ENCODE measurements at regions of chr4 and their contacts with region 1.

Region 1: GRCh38 chr4:139177868-139178611 is 1.0 kb upstream of the ELF2 start:
- DNase-seq: peak; percentile 97
- H3K4me3 Mint-ChIP-seq: peak overlapping the region; percentile 86
- H3K27ac Mint-ChIP-seq: peak overlapping the region; percentile 91
- H3K4me1 Mint-ChIP-seq: peaks cover 36% of the 10 kb centered on the region
- H3K27me3 Mint-ChIP-seq: peaks cover 50% of the 10 kb centered on the region

Region 2: DNA sequence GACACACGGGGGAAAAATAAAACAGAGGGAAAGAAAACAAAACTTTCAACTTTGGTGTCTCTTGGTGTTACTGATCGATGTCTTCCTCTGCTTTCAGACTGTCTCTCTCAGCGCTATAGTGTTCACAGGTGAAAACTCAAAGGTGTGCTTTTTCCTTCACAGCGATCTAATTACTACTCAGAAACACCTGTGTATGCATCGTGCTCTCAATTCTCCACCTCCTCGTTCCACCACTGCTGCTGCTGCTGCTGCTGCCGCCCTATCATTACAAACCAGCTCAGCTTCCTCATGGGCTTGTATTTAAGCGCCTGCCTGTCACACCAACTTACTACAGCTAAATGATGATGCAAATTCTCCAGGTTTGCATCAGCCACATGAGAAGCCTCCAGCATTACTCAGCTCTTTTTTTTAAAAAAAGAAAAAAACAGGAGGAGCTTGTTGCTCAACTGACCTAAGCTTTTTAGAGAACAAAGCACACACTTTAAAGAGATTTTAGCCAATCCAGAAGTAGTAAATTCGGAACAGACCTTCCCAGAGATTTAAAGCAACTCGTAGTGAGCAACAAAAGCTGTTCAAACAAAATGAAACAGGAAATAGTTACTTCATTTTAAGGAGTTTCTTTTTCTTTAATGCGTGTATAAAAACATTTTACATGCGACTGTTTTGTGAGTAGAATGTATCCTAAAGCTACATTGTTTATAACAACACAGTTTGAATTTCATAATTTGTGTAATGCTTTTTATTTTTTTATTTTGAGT is 935.8 kb before region 1 on chr4 and contains the start of gene SLC7A11:
- intact Hi-C with region 1: loop called (anchors 5 kb)
- DNase-seq: peak; percentile 70
- H3K4me3 Mint-ChIP-seq: peak within 1 kb of the TSS; percentile 88
- H3K27ac Mint-ChIP-seq: peak within 1 kb of the TSS; percentile 83
- H3K4me1 Mint-ChIP-seq: peaks cover 32% of the 10 kb centered on the region
- H3K27me3 Mint-ChIP-seq: peaks cover 4% of the 10 kb centered on the region
- total RNA-seq, gene SLC7A11: 2.6 and 2.7 TPM in 2 replicates

Region 3: DNA sequence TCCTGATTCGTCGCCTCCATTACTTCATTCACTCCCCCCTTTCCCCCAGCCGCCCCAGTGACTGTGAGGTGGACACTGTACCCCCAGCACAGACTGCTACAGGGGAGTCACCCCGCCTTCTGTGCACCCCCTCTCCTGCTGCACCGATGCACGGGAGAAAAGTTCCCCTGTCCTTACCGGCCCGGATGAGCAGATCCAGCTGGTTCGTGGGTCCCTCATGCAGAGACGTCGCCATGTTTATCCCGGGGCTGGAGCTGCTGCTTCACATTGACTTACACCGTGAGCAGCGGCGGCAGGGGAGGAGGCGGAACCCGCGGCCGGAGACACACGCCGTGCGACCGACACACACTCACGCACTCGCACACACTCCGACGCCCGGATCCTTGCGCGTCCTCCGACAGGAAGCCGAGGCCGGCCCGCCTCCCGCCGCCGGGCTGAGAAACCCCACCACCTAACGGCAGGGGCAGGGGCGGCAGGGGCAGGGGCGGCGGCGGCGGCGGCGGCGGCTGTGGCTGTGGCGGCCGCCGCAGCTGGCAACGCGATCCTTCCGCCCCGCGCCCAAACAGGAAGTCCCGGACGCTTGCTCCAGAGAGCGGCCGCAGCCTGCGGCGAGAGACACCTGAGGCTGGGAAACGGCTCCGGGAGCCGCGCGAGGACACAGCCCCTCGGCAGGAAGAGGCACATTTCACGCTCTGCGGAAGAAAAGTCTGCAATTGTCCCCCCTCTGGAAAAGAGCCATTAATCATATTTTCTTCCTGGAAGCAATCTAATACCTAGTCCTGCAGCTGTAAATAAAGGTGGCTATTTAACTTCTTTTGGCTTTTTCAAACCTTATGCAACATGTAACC is 93.9 kb before region 1 on chr4:
- intact Hi-C with region 1: loop called (anchors 1 kb)
- DNase-seq: peak; percentile 78
- H3K4me3 Mint-ChIP-seq: peak overlapping the region; percentile 86
- H3K27ac Mint-ChIP-seq: peak overlapping the region; percentile 98
- H3K4me1 Mint-ChIP-seq: peaks cover 28% of the 10 kb centered on the region
- H3K27me3 Mint-ChIP-seq: no peaks in the 10 kb centered on the region

Region 4: GRCh38 chr4:139115226-139115625 is 62.8 kb before region 1 on chr4:
- intact Hi-C with region 1: no loop called
- DNase-seq: no peak
- H3K4me3 Mint-ChIP-seq: no peak overlapping the region
- H3K27ac Mint-ChIP-seq: no peak overlapping the region
- H3K4me1 Mint-ChIP-seq: no peaks in the 10 kb centered on the region
- H3K27me3 Mint-ChIP-seq: no peaks in the 10 kb centered on the region

Region 5: GRCh38 chr4:139266583-139267257 is 88.7 kb after region 1 on chr4:
- intact Hi-C with region 1: loop called (anchors 1 kb)
- DNase-seq: peak; percentile 70
- H3K4me3 Mint-ChIP-seq: peak overlapping the region; percentile 50
- H3K27ac Mint-ChIP-seq: peak overlapping the region; percentile 10
- H3K4me1 Mint-ChIP-seq: peaks cover 21% of the 10 kb centered on the region
- H3K27me3 Mint-ChIP-seq: peaks cover 23% of the 10 kb centered on the region

Region 6: DNA sequence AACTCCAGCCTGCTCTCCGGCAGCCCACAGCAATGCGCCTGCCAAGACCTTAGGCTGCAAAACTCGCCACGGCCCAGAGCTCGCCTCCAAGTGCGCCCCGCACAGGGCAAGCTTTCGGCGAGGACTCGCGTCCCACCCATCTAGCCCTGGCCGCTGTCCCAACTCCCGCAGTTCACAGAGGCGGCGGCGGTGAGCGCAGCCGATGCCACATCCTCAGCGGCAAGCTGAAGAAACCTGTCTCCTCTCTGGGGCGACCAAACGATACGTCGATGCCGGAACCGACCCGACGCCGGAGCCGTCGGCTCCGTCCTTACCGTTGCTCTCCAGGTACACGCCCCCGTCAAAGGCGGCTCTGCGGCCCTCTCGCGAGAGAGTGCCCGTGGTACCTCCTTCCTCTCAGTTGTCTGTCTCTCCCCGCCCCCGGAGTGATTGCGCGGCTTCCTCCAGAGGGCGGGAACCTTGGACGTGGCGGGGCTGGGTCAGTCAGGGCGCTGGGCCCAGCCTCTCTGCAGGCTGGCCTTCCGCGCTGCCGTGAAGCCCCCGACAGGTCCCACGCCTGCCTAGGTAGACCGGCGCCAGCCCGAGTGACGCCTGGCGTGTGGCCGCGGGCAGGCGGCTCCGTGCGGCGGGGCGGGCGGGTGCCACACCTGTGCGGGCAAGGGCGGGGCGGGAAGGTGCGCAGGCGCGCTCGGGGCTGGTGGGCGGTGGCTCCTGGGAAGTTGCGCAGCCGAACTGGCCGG is 275.5 kb after region 1 on chr4:
- intact Hi-C with region 1: loop called (anchors 1 kb)
- DNase-seq: peak; percentile 95
- H3K4me3 Mint-ChIP-seq: peak overlapping the region; percentile 94
- H3K27ac Mint-ChIP-seq: peak overlapping the region; percentile 99
- H3K4me1 Mint-ChIP-seq: peaks cover 58% of the 10 kb centered on the region
- H3K27me3 Mint-ChIP-seq: no peaks in the 10 kb centered on the region

Region 7: GRCh38 chr4:139934057-139934707 is 756.1 kb after region 1 on chr4:
- intact Hi-C with region 1: no loop called
- DNase-seq: no peak
- H3K4me3 Mint-ChIP-seq: no peak overlapping the region
- H3K27ac Mint-ChIP-seq: no peak overlapping the region
- H3K4me1 Mint-ChIP-seq: no peaks in the 10 kb centered on the region
- H3K27me3 Mint-ChIP-seq: peaks cover 11% of the 10 kb centered on the region

Region 8: DNA sequence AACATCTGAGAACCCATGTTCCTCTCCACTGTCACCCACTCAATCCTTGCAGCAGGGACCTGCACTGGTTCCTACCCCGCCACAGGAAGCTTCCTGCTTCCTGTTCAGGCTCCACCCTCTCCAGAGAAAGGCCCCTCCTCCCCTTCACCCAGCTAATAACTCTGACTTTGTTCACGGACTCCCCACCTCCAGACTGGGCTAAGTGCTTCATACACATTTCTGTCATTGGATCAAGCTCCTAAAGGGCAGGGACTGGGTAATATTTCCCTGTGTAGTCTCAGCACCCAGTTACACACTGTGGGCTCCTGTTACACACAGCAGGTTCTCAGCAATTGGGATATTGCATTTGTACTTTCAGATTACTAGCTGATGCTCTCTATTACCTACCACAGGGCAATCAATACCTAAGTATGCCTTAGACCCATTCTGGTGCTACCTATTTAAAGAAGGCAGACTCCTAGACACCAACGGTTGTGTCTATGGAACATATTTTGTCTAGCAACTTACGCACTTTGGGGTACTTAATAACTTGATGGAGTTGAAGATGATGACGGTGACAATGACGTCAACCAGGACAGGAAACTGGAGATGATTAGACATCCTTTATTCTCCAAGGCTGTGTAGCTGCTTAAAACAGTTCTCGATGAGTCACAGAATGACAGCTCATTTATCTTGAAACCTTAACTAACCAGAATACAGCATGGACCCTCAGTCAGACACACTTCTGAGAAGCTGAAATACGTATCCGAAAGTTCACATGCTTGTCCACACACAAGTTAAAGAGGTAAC is 917.8 kb after region 1 on chr4:
- intact Hi-C with region 1: loop called (anchors 5 kb)
- DNase-seq: peak; percentile 63
- H3K4me3 Mint-ChIP-seq: peak overlapping the region; percentile 80
- H3K27ac Mint-ChIP-seq: peak overlapping the region; percentile 94
- H3K4me1 Mint-ChIP-seq: peaks cover 89% of the 10 kb centered on the region
- H3K27me3 Mint-ChIP-seq: peaks cover 3% of the 10 kb centered on the region